Mammary epithelial cell (primary cell): ENCODE measurements at regions of chr10 and their contacts with region 1.

Region 1: DNA sequence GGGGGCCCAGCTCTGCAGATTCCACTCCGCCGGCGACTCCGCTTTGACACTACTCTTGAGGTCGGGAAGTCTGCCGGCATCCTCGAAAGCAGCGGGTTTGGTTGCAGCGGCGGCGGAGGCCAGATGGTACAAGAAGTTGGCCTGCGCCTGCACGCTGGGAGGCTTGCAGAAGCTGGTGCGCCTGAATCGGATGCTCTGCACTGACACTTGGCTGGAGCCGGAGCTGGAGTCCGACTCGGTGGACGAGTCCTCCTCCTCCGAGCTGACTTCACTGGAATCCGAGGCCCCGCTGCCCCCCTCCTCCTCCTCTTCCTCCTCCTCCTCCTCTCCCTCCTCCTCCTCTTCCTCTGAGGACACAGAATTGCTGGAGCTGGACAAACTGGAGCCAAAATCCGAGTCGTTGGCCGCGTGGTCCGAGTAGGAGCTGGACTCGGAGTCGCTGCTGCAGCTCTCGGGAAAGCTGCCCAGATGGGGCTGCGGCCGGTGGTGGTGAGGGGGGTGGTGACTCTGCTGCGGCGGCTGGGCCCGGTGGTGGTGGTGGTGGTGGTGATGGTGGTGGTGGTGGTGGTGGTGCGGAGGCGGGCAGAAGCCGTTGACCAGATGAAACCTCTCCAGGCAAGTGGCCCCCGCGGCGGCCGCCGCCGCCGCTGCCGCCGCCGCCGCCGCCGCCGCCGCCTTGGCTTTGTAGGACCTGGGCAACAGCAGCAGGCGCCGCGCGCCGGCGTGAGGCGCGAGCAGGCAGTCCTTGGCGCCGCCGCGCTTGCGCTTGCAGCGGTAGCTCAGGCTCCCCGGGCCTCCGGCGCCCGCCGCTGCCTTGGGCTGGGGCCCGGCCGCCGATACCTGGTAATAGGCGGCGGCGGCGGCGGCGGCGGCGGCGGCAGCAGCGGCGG is 9.0 kb downstream of the SKIDA1 start:
- DNase-seq: peak; percentile 56
- H3K4me3 ChIP-seq: peak overlapping the region; percentile 44 to 68 (median 67)
- H3K27ac ChIP-seq: no peak overlapping the region
- H3K4me1 ChIP-seq: peaks cover 18% of the 10 kb centered on the region
- H3K27me3 ChIP-seq: no peaks in the 10 kb centered on the region
- CTCF ChIP-seq: no peak

Region 2: DNA sequence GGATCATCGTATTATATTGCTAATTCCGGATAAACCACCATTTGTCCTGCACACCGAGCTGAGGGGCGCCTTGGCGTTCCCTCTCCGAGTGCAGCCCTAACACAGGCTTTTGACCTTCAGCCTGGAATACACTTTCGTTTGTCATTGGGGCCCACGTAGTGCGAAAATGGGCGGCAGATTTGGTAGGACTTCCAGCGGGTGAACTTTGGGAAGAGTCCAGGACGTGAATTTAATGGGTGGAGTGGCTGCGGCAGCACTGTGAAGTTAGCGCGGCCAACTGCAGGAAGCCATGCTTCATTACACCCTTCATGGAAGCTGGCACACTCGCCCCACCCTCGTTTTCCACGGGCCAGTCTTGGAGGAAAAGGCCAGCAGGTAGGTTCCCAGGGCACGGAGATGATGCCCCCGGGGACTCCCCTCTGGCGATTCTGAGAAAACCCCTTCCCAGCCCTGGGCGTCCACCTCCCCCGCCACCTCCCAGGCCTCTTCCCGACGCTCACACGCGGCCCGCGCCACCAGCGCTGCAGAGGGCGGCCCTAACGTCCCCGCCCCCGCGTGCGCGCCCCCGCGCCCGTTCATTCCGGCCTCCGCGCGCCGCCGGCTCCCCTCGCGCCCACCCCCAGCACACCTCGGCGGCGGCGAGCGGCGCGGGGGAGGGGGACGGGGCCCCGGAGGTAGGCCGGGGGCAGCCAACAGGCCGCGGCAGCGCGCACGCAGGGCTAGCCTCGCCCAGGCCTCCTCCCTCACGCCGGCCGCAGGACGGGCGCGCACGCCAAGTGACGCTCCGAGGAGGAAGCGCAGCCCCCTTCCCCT is 17.2 kb after region 1 on chr10 and contains the start of gene MLLT10:
- CTCF ChIA-PET with region 1: interaction called, 3 read pairs
- dilution Hi-C with region 1: no loop called
- in situ Hi-C with region 1: no loop called
- intact Hi-C with region 1: loop called (anchors 1 kb)
- DNase-seq: peak; percentile 92
- H3K4me3 ChIP-seq: peak within 1 kb of the TSS; percentile 47 to 63 (median 59)
- H3K27ac ChIP-seq: peak within 1 kb of the TSS; percentile 74
- H3K4me1 ChIP-seq: peaks cover 12% of the 10 kb centered on the region
- H3K27me3 ChIP-seq: no peaks in the 10 kb centered on the region
- CTCF ChIP-seq: peak; percentile 15 to 39
- total RNA-seq, gene MLLT10: 33.7 to 38.2 TPM